Activated T-helper 1 cell treated with anti-CD3 and anti-CD28 coated beads, Interleukin-12 subunit alpha, Interleukin-12 subunit beta, Interleukin-2, Interleukin-4 antibody, amounts not matched to agents 30 ng/mL and 10 ng/mL and 1 ng/mL, durations not matched to agents 14 hours and 24 hours and 36 hours (primary cell): ENCODE measurements at regions of chr20 and their contacts with region 1.

Region 1: GRCh38 chr20:1734269-1734858 is 76.8 kb upstream of the SIRPG start:
- DNase-seq: no peak
- H3K4me3 Mint-ChIP-seq: no peak overlapping the region
- H3K27ac Mint-ChIP-seq: no peak overlapping the region
- H3K4me1 Mint-ChIP-seq: peaks cover 40% of the 10 kb centered on the region
- H3K27me3 Mint-ChIP-seq: peaks cover 2% of the 10 kb centered on the region

Region 2: DNA sequence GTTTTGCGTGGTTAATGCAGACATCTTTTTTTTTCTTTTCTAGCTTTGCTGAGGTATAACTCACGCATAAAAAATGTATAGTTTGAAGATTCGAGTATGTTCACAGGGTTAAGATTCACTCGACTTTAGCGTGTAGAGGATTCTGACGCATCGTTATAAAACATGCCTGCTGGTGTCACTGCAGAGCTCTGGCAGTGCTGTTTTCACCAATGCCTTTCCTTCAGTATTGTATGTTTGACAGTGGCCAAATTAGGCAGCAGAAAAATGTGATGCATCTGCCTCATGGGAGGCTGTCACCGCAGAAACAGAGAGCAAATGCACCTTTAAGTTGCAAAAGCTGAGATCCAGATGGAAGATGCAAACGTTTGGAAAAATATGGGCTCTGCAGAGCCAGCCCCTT is 225.1 kb before region 1 on chr20:
- intact Hi-C with region 1: loop called (anchors 1 kb)
- DNase-seq: no peak
- H3K4me3 Mint-ChIP-seq: no peak overlapping the region
- H3K27ac Mint-ChIP-seq: no peak overlapping the region
- H3K4me1 Mint-ChIP-seq: no peaks in the 10 kb centered on the region
- H3K27me3 Mint-ChIP-seq: peaks cover 5% of the 10 kb centered on the region

Region 3: DNA sequence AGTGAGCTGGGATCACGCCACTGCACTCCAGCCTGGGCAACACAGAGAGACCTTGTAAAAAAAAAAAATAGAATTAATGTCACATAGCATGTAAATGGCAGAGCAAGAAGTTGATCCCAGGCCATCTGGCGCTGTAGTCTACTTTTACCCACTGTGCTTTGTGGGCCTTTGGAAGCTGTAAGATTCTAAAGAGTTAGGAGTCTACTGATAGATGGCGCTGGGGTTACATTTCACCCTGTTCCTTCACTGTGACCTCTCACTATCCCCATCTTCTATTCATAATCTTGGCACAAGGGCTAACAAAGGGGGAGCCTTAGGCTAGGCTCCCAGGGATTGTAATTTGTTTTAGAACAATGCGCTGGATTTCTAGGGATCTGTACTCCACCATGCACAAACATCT is 201.3 kb before region 1 on chr20:
- intact Hi-C with region 1: loop called (anchors 1 kb)
- DNase-seq: no peak
- H3K4me3 Mint-ChIP-seq: no peak overlapping the region
- H3K27ac Mint-ChIP-seq: no peak overlapping the region
- H3K4me1 Mint-ChIP-seq: peaks cover 7% of the 10 kb centered on the region
- H3K27me3 Mint-ChIP-seq: peaks cover 6% of the 10 kb centered on the region

Region 4: DNA sequence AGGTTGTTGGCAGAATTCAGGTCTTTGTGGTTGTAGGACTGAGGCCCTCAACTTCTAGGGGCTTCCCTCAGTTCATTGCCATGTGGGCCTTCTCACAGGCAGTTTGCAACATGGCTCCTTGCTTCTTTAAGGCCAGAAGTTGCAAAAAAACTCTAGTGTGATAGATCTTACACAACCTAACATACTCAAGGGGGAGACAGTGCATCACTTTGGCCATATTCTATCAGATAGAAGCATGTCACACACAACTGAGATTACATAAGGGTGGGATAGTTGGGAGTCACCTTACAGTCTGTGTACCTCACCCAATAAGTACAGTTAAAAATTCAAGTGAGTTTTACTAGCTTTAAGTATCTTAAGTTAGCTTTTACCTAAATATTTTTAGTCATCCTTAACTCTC is 178.4 kb before region 1 on chr20:
- intact Hi-C with region 1: loop called (anchors 1 kb)
- DNase-seq: no peak
- H3K4me3 Mint-ChIP-seq: no peak overlapping the region
- H3K27ac Mint-ChIP-seq: no peak overlapping the region
- H3K4me1 Mint-ChIP-seq: no peaks in the 10 kb centered on the region
- H3K27me3 Mint-ChIP-seq: peaks cover 2% of the 10 kb centered on the region

Region 5: GRCh38 chr20:1623501-1624265 is 110.7 kb before region 1 on chr20:
- intact Hi-C with region 1: loop called (anchors 2 kb)
- DNase-seq: no peak
- H3K4me3 Mint-ChIP-seq: no peak overlapping the region
- H3K27ac Mint-ChIP-seq: peak overlapping the region; percentile 36
- H3K4me1 Mint-ChIP-seq: peaks cover 87% of the 10 kb centered on the region
- H3K27me3 Mint-ChIP-seq: no peaks in the 10 kb centered on the region

Region 6: DNA sequence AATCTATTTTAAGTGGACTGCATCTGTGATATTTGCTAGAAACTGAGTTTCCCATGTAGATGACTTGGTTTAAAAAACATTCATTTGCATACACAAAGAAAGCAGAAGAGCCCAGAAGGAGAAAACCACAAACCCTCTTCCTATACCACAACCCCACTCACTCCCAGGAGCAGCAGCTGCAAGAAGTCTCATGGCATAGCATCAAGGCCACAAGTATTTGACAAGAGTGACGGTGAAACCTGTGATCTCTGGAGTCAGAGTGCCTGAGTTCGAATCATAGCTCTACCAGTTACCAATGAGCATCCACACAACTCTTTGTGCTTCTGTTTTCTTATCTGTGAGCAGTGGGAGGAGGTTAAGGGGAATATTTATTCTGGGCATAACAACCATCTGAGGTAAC is 32.0 kb before region 1 on chr20:
- intact Hi-C with region 1: no loop called
- DNase-seq: no peak
- H3K4me3 Mint-ChIP-seq: no peak overlapping the region
- H3K27ac Mint-ChIP-seq: no peak overlapping the region
- H3K4me1 Mint-ChIP-seq: peaks cover 7% of the 10 kb centered on the region
- H3K27me3 Mint-ChIP-seq: peaks cover 3% of the 10 kb centered on the region

Region 7: DNA sequence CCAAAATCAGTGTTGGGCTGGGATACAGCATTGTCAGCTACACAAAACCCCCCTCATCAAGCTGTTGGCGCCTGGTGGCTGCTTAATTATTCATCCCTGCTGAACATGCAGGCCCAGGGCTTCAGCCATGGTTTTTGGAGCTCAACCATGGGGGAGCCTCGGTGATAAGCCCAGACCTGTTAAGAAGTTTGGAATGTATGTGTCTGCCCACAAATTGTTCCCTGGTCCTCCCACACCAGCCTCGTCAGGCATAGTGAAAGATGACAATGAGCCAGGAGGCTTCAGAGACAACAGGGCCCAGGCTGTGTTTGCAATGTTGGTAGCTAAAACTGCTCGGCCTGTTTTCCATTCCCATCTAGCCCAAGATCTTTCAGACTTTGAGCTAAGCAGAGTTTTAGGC is 126.1 kb after region 1 on chr20:
- intact Hi-C with region 1: no loop called
- DNase-seq: no peak
- H3K4me3 Mint-ChIP-seq: no peak overlapping the region
- H3K27ac Mint-ChIP-seq: no peak overlapping the region
- H3K4me1 Mint-ChIP-seq: no peaks in the 10 kb centered on the region
- H3K27me3 Mint-ChIP-seq: peaks cover 2% of the 10 kb centered on the region